Calu3 (cell line): ENCODE measurements at regions of chr11 and their contacts with region 1.

Region 1: DNA sequence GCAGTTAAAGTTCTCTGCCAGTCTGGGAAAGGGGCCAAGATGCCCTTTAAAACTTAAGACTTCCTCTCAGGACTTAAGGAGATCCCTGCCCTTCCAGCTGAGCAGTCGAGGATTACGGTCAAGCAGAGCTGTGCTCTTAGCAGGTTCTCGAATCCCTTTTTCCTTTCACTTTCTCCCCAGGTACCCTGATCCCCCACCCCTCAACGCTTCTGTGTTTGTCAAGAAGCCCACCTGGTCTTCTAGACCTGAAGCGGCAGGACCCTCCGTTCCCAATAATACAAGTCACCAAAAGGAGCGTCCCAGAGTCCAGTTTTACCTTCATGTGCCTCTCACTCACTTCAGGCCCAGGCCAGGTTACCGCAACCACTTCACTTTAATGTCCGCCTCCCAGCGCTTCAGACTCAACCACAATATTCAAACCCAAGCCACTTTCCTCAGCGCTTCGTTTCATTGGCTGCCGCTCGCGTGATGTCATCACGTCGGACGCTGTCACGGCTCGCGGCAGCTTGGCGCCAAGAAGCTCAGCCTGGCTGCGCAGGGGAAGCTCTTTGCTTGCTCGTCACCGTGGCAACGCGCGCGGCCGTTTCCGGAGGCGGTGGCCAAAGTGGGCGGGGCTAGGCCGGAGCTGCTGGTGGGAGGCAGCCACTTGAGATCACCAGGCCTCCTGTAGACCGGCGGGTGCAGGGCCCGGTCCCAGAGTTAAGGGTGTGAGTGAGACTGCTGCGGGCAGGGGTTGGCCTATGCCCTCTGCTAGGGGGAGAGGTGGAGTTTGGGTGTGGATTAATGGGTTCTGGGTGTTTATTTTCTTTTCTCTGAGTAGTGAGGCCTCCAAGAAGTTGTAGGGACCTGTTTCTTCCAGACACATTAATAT is at the starts of genes KIF18A and METTL15:
- DNase-seq: peak; percentile 99
- H3K4me3 Mint-ChIP-seq: peak within 1 kb of the TSS; percentile 87
- H3K27ac Mint-ChIP-seq: peak within 1 kb of the TSS; percentile 97
- H3K4me1 Mint-ChIP-seq: peaks cover 22% of the 10 kb centered on the region
- H3K27me3 Mint-ChIP-seq: no peaks in the 10 kb centered on the region
- CTCF ChIP-seq: no peak
- total RNA-seq, gene KIF18A: 29.9 and 31.5 TPM in 2 replicates
- total RNA-seq, gene METTL15: 19.0 and 19.4 TPM in 2 replicates

Region 2: DNA sequence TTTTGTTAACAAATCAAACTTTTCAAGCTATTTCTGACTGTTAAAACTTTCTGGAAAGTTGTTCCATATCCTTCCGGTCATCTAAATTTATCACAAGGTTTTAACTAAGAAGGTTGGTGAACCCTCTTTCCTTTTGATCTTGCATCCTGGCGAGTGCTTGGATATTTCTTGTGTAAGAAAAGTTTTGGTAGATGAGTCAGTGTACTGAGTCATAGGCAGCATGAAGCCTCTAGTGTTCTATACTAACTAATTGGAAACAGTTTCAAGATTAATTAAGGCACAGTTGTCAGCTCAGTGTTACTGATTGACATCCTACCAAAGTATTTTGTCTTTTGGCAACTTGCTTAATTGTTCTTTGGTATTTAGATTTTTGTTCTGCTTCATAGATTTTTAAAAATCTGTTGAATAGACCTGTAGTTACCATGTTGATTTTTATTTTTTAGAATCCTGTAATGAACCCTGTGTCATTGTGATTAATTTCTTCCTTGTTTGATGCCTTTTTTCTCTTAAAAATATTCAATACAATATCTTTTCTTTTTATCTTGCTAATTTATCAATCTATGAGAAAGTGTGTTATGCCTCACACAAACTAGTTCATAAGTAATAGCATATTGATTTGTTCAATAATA is 38.3 kb after region 1 on chr11:
- CTCF ChIA-PET with region 1: interaction called, 3 read pairs
- intact Hi-C with region 1: loop called (anchors 2 kb)
- DNase-seq: peak; percentile 28
- H3K4me3 Mint-ChIP-seq: no peak overlapping the region
- H3K27ac Mint-ChIP-seq: peak overlapping the region; percentile 84
- H3K4me1 Mint-ChIP-seq: peaks cover 32% of the 10 kb centered on the region
- H3K27me3 Mint-ChIP-seq: no peaks in the 10 kb centered on the region
- CTCF ChIP-seq: no peak

Region 3: GRCh38 chr11:28346209-28346608 is 238.2 kb after region 1 on chr11:
- CTCF ChIA-PET with region 1: no interaction called
- intact Hi-C with region 1: loop called (anchors 5 kb)
- DNase-seq: no peak
- H3K4me3 Mint-ChIP-seq: no peak overlapping the region
- H3K27ac Mint-ChIP-seq: peak overlapping the region; percentile 36
- H3K4me1 Mint-ChIP-seq: peaks cover 20% of the 10 kb centered on the region
- H3K27me3 Mint-ChIP-seq: no peaks in the 10 kb centered on the region
- CTCF ChIP-seq: no peak

Region 4: GRCh38 chr11:28529540-28530410 is 421.8 kb after region 1 on chr11:
- CTCF ChIA-PET with region 1: interaction called, 3 read pairs
- intact Hi-C with region 1: loop called (anchors 2 kb)
- DNase-seq: peak; percentile 22
- H3K4me3 Mint-ChIP-seq: no peak overlapping the region
- H3K27ac Mint-ChIP-seq: no peak overlapping the region
- H3K4me1 Mint-ChIP-seq: no peaks in the 10 kb centered on the region
- H3K27me3 Mint-ChIP-seq: no peaks in the 10 kb centered on the region
- CTCF ChIP-seq: peak; percentile 10